Calu3 (cell line): ENCODE measurements at regions of chr12 and their contacts with region 1.

Region 1: GRCh38 chr12:102917026-102917787 is at the start of gene PAH:
- DNase-seq: peak; percentile 84
- H3K4me3 Mint-ChIP-seq: peak within 1 kb of the TSS; percentile 60
- H3K27ac Mint-ChIP-seq: peak within 1 kb of the TSS; percentile 82
- H3K4me1 Mint-ChIP-seq: peaks cover 80% of the 10 kb centered on the region
- H3K27me3 Mint-ChIP-seq: no peaks in the 10 kb centered on the region
- CTCF ChIP-seq: no peak
- total RNA-seq, gene PAH: 31.4 and 48.9 TPM in 2 replicates

Region 2: DNA sequence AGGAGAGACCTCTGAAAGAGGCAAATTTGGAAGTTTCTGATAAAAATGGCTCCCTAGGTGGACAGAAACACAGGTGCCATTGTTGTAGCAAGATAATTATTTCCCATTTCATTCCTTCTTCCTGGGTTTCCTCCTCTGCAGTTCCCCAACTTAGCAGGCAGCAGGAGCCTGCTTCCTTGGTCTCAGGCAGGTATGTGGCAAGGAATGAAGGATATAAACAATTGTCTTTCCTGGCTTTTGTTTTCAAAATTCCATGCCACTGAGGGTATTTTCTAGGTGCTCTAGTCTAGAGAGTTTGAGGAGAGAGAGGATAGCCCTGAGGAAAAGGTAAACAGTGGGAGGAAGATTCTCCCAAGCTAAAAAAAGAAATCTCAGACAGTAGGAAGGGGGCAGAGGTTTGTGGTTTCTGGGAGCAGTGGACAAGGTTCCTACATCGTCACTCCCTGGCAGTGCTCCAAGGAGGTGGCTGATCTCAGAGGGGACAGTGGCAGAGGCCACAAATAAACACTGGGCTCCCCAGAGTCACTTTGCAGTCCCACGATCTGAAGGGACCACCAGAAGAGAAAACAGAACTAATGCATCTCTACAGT is 354.3 kb before region 1 on chr12:
- CTCF ChIA-PET with region 1: no interaction called
- intact Hi-C with region 1: no loop called
- DNase-seq: peak; percentile 69
- H3K4me3 Mint-ChIP-seq: peak overlapping the region; percentile 11
- H3K27ac Mint-ChIP-seq: peak overlapping the region; percentile 50
- H3K4me1 Mint-ChIP-seq: peaks cover 42% of the 10 kb centered on the region
- H3K27me3 Mint-ChIP-seq: no peaks in the 10 kb centered on the region
- CTCF ChIP-seq: no peak

Region 3: DNA sequence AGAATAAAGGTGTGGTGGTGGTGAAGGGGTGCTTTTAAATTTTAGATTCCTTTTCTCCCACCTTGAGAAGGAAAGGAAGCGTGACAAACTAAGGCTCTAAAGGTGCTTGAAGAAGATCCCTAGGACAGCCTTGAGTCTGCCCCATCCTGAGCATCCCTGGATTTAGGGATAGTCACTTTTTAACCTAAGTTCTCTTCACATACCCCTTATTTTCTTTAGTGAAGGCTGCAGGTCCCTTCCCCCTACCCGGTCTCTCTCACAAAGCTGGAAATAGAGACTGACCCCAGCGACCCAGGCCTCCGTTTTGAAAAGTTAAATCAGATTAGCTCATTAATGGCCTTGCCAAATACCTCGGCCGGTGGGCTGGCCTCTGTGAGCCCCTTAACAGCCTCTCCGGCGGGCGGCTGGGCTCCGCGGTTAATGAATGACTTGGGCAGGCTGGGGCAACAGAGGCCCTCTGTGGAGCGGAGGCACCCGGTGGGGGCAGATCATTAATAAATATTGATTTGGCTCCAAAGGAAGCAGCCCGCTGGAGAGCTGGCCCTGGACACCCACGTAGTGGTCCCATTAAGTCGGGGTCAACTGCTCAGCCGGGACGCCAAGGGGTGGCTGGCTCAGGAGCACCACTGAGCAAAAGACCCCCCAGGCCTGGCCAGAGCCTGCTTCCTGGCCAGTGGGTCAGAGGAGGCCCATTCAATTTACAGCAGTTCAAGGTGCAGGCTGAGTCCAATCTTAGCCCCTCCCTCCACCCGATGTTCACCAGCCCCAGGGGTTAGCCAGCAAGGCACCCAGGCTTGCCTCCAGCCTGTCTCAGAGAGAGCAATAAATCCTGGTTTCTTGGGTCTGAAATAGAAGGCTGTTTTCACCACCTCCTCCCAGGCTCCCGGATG is 31.9 kb before region 1 on chr12:
- CTCF ChIA-PET with region 1: interaction called, 5 read pairs
- intact Hi-C with region 1: loop called (anchors 1 kb)
- DNase-seq: peak; percentile 82
- H3K4me3 Mint-ChIP-seq: peak overlapping the region; percentile 52
- H3K27ac Mint-ChIP-seq: no peak overlapping the region
- H3K4me1 Mint-ChIP-seq: peaks cover 34% of the 10 kb centered on the region
- H3K27me3 Mint-ChIP-seq: no peaks in the 10 kb centered on the region
- CTCF ChIP-seq: no peak